GM23248 (cell line): ENCODE measurements at regions of chr7 and their contacts with region 1.

Region 1: DNA sequence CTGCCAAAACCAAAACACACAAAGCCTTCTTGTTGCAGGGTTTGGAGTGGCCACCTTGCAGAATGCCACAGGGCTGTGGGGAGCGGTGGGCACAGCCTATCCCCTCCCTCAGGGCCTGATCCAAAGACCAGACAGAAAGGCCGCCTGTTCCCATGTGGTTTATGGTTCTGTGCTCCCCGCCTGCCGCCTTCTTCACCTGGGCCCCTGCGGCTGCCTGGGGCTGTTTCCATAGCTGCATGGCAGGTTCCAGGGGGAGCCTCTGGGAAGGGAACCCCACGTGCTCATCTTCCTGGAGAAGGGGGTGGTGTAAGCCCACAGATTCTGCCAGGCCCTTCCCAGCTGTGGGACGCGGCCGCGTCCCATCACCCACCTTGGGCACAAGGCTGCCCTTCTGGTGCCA is 70.7 kb upstream of the EZH2 start:
- DNase-seq: no peak
- H3K4me3 ChIP-seq: no peak overlapping the region
- H3K27ac ChIP-seq: no peak overlapping the region
- H3K4me1 ChIP-seq: no peaks in the 10 kb centered on the region
- H3K27me3 ChIP-seq: no peaks in the 10 kb centered on the region

Region 2: DNA sequence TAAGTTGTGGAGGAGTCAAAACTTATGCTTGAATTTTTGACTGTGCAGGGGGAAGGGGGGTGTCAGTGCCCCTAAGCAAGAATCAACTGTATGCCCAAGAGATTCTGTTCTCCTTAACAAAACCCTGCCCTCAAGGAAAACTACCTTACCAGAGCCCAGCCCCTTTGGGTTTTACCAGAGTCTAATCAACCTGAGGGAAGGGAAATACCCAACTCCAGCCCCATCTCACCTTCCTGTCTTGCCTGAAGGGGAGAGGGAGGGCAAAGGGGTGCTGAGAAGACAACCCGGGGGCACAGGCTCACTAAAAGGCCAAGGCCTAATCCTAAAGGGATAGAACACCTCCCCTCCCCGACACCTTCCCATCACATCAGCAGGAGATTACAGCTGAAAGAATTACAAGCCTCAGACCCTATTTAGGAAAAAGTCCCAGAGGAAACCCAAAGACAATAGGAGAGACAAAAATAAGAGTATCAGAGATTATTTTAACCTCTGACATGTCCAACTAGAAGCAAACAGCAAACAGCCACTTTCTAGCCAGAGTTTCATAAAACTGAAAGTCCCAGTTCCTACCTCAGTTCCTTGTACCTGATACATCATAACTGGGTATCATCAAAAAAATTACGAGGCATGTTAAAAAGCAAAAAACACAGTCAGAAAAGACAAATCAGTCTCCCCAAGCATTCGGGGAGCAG is 391.0 kb before region 1 on chr7:
- in situ Hi-C with region 1: loop called (anchors 10 kb)
- DNase-seq: no peak
- H3K4me3 ChIP-seq: no peak overlapping the region
- H3K27ac ChIP-seq: no peak overlapping the region
- H3K4me1 ChIP-seq: peaks cover 4% of the 10 kb centered on the region; the same call in 1 of the 2 replicates
- H3K27me3 ChIP-seq: no peaks in the 10 kb centered on the region

Region 3: GRCh38 chr7:148664324-148664723 is 290.4 kb before region 1 on chr7:
- in situ Hi-C with region 1: no loop called
- DNase-seq: peak; percentile 48
- H3K4me3 ChIP-seq: no peak overlapping the region
- H3K27ac ChIP-seq: no peak overlapping the region
- H3K4me1 ChIP-seq: no peaks in the 10 kb centered on the region
- H3K27me3 ChIP-seq: no peaks in the 10 kb centered on the region

Region 4: DNA sequence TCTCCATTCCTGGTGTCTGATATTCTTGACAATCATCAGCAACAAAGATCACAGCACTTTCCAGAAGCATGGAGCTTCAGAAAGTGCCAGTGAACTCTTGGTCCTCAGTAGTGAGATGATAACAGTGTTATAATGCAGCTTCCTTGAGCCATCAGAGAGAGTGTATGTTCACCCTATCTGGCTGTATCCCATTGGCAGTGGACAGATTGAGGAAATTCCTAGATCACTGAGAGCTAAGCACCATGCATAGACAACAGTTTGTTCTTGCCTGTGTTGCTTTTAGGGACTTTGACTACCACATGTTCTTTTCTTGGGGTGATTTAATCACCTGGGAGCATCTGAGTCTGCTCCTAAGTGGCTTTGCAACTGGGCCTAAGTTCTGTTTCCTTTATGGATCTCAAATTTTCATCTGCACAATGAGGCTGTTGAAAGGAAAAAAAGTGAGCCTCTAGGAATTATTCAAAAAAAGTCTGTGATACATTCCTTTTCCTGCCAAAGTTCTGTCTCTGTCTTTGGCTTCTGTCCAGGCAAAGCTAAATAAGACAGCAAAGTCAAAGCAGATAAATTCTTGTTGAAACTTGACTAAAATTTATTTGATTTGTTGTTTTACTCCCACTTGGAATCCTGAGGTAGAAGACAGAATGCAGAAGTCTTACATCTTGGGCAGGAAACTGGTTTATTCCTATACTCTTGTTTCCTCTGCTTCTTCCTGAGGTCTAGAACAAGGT is 226.1 kb after region 1 on chr7:
- in situ Hi-C with region 1: no loop called
- DNase-seq: no peak
- H3K4me3 ChIP-seq: no peak overlapping the region
- H3K27ac ChIP-seq: no peak overlapping the region
- H3K4me1 ChIP-seq: no peaks in the 10 kb centered on the region
- H3K27me3 ChIP-seq: no peaks in the 10 kb centered on the region